ENCODE measurements at regions of chr5 and their contacts with region 1.

Region 1: DNA sequence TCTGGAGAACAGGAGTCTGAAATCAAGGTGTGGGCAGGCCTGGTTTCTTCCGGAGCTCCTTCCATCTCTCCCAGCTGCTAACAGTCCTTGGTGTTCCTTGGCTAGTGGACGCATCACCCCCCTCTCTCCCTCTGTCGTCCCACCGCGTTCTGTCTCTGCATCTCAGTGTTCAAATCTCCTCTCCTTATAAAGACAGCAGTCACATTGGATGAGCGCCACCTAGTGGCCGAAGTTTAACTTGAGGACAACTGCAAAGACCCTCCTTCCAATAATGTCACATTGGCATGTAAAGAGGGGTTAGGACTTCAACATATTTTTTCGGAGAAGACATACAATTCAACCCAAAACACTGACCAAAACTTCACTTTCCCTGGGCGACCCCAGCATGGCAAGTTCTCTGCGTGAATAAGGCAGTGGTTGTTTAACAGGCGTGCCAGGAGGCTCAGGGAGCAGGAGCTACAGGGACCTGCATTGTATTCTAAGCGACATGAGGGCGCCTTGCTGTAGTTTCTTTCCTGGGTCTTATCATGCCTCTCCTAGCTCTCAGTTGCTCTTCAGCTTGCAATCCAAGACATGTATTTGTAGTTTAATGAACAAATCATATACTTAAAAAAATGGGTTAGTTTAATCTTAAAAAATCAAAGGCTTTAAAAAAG is 27.9 kb upstream of the BASP1 start:
- DNase-seq: no peak
- H3K4me3 ChIP-seq: no peak overlapping the region
- H3K27me3 ChIP-seq: no peaks in the 10 kb centered on the region
- CTCF ChIP-seq: peak; percentile 78

Region 2: DNA sequence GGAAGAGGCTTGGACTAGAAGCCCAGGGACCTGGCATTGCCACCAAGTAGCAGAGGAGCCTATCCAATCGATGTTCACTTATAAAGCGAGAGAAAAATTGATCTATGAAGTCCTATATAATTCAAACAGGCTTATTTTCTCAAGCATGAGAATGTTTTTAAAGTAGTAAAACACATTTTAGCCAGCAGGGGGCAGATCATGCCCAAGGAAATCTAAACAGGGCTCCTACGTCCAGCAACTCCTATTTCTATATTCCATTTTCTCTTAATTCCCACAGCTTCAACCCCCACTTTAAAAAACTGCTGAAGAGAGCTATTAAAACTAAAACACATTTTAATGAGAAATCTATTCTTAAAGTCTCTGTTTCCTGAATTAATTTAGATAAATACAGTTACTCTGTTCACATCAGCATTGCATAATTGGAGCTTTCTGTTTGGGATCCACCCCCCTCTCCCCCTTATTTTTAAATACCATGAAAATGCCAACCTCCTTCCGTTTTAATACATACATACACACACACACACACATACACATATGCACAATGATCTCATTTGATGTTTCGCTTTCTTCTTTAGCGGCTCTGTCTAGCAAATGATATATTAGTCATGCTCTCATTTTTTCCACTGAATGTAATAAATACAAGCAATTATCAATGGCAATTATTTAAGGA is 398.3 kb before region 1 on chr5:
- CTCF ChIA-PET with region 1: interaction called, 69 read pairs
- POLR2A ChIA-PET with region 1: no interaction called
- DNase-seq: no peak
- H3K4me3 ChIP-seq: no peak overlapping the region
- H3K27me3 ChIP-seq: no peaks in the 10 kb centered on the region
- CTCF ChIP-seq: peak; percentile 59

Region 3: GRCh38 chr5:16886366-16886736 is 303.2 kb before region 1 on chr5:
- CTCF ChIA-PET with region 1: interaction called, 10 read pairs
- POLR2A ChIA-PET with region 1: no interaction called
- DNase-seq: no peak
- H3K4me3 ChIP-seq: no peak overlapping the region
- H3K27me3 ChIP-seq: no peaks in the 10 kb centered on the region
- CTCF ChIP-seq: no peak

Region 4: GRCh38 chr5:16992444-16992843 is 197.1 kb before region 1 on chr5:
- CTCF ChIA-PET with region 1: interaction called, 10 read pairs
- POLR2A ChIA-PET with region 1: no interaction called
- DNase-seq: no peak
- H3K4me3 ChIP-seq: no peak overlapping the region
- H3K27me3 ChIP-seq: no peaks in the 10 kb centered on the region
- CTCF ChIP-seq: no peak

Region 5: GRCh38 chr5:17132444-17133083 is 56.9 kb before region 1 on chr5:
- CTCF ChIA-PET with region 1: interaction called, 56 read pairs
- POLR2A ChIA-PET with region 1: no interaction called
- DNase-seq: no peak
- H3K4me3 ChIP-seq: no peak overlapping the region
- H3K27me3 ChIP-seq: no peaks in the 10 kb centered on the region
- CTCF ChIP-seq: peak; percentile 58

Region 6: GRCh38 chr5:17169507-17169906 is 20.0 kb before region 1 on chr5:
- CTCF ChIA-PET with region 1: interaction called, 10 read pairs
- POLR2A ChIA-PET with region 1: no interaction called
- DNase-seq: peak; percentile 95
- H3K4me3 ChIP-seq: no peak overlapping the region
- H3K27me3 ChIP-seq: no peaks in the 10 kb centered on the region
- CTCF ChIP-seq: no peak

Region 7: DNA sequence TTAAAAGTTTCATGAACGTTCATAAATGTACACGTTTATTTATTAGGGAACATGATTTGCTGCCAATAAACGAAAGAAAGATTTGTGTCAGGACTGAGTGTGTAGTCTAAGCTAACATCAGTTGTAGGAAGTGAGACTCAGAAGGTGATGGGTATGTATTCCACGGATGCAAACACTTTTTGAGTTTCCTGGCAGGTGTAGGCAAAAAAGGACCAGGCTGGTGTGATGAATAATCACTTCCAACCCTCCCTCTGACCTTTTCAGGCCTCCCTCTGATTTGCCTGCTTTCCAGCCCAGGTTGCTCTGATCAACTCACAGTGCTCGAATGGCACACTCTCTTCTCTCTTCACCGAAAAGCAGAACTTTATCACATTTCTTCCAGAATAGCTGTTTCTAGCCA is 79.7 kb after region 1 on chr5:
- CTCF ChIA-PET with region 1: no interaction called
- POLR2A ChIA-PET with region 1: no interaction called
- DNase-seq: no peak
- H3K4me3 ChIP-seq: no peak overlapping the region
- H3K27me3 ChIP-seq: no peaks in the 10 kb centered on the region
- CTCF ChIP-seq: no peak

Region 8: GRCh38 chr5:18152671-18153070 is 963.2 kb after region 1 on chr5:
- CTCF ChIA-PET with region 1: no interaction called
- POLR2A ChIA-PET with region 1: no interaction called
- DNase-seq: no peak
- H3K4me3 ChIP-seq: no peak overlapping the region
- H3K27me3 ChIP-seq: no peaks in the 10 kb centered on the region
- CTCF ChIP-seq: no peak